Activated B cell treated with CpG ODN at 0.5 μM for 24 hours (primary cell): ENCODE measurements at regions of chr1 and their contacts with region 1.

Region 1: GRCh38 chr1:28648474-28649198 is at the start of gene RNU11:
- DNase-seq: peak; percentile 72
- ATAC-seq: peak; percentile 65
- H3K4me3 Mint-ChIP-seq: peak within 1 kb of the TSS; percentile 91
- H3K27ac Mint-ChIP-seq: peak within 1 kb of the TSS; percentile 100
- H3K4me1 Mint-ChIP-seq: peaks cover 35% of the 10 kb centered on the region
- H3K27me3 Mint-ChIP-seq: no peaks in the 10 kb centered on the region
- CTCF ChIP-seq: no peak
- total RNA-seq, gene RNU11: not detected in 2 replicates

Region 2: GRCh38 chr1:28505406-28506187 is 143.0 kb before region 1 on chr1 and contains the start of gene RCC1:
- CTCF ChIA-PET with region 1: no interaction called
- POLR2A ChIA-PET with region 1: interaction called, 59 read pairs
- intact Hi-C with region 1: loop called (anchors 1 kb)
- DNase-seq: peak; percentile 82
- ATAC-seq: peak; percentile 87
- H3K4me3 Mint-ChIP-seq: peak within 1 kb of the TSS; percentile 98
- H3K27ac Mint-ChIP-seq: peak within 1 kb of the TSS; percentile 98
- H3K4me1 Mint-ChIP-seq: peaks cover 38% of the 10 kb centered on the region
- H3K27me3 Mint-ChIP-seq: no peaks in the 10 kb centered on the region
- CTCF ChIP-seq: no peak
- total RNA-seq, gene RCC1: 45.2 and 47.5 TPM in 2 replicates

Region 3: GRCh38 chr1:28552758-28553663 is 95.6 kb before region 1 on chr1 and contains the start of gene TRNAU1AP:
- CTCF ChIA-PET with region 1: no interaction called
- POLR2A ChIA-PET with region 1: interaction called, 21 read pairs
- intact Hi-C with region 1: loop called (anchors 1 kb)
- DNase-seq: peak; percentile 94
- ATAC-seq: peak; percentile 93
- H3K4me3 Mint-ChIP-seq: peak within 1 kb of the TSS; percentile 99
- H3K27ac Mint-ChIP-seq: peak within 1 kb of the TSS; percentile 98
- H3K4me1 Mint-ChIP-seq: peaks cover 26% of the 10 kb centered on the region
- H3K27me3 Mint-ChIP-seq: no peaks in the 10 kb centered on the region
- CTCF ChIP-seq: no peak
- total RNA-seq, gene TRNAU1AP: 36.9 and 42.0 TPM in 2 replicates

Region 4: GRCh38 chr1:28602536-28603439 is 45.8 kb before region 1 on chr1:
- CTCF ChIA-PET with region 1: no interaction called
- POLR2A ChIA-PET with region 1: no interaction called
- intact Hi-C with region 1: no loop called
- DNase-seq: no peak
- ATAC-seq: peak; percentile 42
- H3K4me3 Mint-ChIP-seq: no peak overlapping the region
- H3K27ac Mint-ChIP-seq: no peak overlapping the region
- H3K4me1 Mint-ChIP-seq: no peaks in the 10 kb centered on the region
- H3K27me3 Mint-ChIP-seq: no peaks in the 10 kb centered on the region
- CTCF ChIP-seq: peak; percentile 53

Region 5: DNA sequence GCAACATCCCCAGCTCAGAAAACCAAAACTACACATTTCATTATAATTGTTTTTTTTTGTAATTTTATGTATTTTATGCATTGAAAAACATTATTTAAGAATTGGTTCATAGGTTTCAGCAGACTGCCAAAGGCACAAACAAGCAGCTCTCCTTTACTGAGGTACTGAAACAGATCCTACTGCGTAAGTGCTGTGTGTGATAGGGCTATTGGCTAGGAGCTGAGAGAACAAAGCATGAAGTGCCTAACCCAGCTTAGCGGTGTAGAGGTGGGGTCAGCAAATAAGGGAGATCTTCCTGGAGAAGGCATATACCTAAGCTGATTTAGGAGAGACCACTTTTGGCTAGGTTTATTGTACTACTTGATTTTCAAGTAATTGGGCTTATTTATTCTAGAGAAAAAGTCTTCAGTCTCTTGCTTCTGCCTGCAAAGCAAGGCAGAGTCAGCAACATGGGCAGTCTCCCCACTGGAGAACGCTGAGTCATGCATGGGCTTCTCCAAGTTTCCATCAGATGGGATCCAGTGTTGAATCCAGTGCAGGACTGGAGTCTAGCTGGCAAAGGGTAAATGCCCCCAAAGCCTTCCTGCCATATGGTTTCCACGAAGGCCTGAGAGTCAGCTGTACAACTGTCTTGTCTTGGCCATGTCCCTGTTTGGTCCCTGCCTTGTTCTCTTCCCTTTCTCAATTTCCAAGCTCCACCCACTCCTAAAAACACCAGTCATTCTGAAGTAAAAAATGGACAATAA is 70.1 kb after region 1 on chr1:
- CTCF ChIA-PET with region 1: no interaction called
- POLR2A ChIA-PET with region 1: interaction called, 10 read pairs
- intact Hi-C with region 1: no loop called
- DNase-seq: no peak
- ATAC-seq: no peak
- H3K4me3 Mint-ChIP-seq: no peak overlapping the region
- H3K27ac Mint-ChIP-seq: no peak overlapping the region
- H3K4me1 Mint-ChIP-seq: no peaks in the 10 kb centered on the region
- H3K27me3 Mint-ChIP-seq: no peaks in the 10 kb centered on the region
- CTCF ChIP-seq: no peak

Region 6: DNA sequence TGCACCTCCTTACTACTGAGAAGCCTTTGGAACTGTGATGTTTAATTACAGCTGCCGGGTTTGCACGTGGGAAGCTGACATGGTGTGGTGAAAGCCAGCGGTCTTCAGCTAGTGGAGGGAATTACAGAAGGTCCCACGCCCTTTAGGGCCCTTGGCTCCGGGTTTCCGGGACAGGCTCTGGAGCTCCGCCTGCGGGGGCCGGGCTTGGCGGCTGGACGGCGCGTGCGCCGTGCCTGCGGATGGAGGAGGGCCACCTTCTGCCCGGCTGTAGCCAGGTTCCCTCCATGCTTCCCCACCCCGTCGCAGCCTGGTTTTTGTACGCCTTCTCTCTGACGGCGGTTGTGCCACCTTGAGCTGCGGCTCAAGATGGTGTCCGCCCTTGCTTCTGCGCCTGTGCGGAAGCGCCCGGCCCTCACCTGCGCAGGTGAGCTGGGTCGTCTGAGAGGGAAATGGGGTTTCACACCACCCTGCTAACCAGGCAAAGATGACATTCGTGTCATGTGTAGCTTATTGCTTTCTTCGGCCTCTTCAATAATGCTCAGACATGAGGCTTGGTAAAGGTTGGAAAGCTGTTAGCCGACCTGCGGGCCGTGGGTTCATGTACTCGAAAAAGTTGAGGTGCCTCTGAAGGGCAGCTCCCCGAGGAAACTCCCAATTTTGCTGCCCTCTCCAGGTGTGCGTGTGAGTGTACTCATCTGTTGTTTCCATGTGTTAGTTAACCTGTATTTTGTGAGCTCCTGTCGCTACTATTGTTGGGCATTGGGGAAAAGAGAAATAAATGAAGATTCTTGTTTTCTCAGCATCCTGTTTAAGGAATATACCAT is 126.7 kb after region 1 on chr1:
- CTCF ChIA-PET with region 1: interaction called, 7 read pairs
- POLR2A ChIA-PET with region 1: interaction called, 20 read pairs
- intact Hi-C with region 1: no loop called
- DNase-seq: peak; percentile 62
- ATAC-seq: peak; percentile 95
- H3K4me3 Mint-ChIP-seq: peak overlapping the region; percentile 87
- H3K27ac Mint-ChIP-seq: peak overlapping the region; percentile 61
- H3K4me1 Mint-ChIP-seq: peaks cover 10% of the 10 kb centered on the region
- H3K27me3 Mint-ChIP-seq: no peaks in the 10 kb centered on the region
- CTCF ChIP-seq: no peak

Region 7: DNA sequence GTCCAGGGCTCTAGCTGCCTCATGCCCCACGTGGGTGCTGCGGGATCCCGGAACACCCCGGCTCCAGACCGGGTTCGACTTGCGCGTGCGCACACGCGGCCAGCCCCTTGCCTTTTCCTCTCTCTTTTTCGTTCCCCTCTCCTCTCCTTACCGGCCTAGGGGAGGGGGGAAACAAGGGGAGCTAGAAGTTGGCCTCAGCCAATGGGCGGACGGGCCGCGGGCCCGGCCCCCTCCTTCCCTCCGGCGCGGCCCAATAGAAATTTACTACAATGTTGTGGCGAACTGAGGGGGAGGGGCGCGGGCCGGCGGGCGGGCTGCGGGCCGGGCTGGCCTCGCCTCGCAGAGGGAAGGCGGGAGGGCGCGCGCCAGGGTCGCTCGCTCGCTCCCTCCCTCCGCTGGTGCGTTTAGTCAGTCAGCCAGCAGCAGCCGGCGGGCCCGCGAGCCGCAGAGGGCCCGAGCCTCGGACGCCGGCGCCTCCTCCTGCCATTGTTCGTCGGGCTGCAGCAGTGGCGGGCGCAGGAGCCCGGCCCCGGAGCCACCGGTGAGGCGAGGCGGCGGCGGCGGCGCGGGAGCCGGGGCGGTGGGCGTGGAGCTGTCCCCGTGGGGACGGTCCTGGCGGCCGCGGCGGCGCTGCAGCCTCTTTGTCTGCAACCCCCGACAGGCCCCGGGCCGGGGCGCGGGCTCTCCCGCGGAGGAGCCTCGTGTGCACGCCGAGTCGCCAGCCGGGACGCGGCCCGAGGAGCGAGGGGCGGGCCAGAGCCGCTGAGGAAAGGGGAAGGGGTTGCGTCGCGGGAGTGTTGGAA is 265.8 kb after region 1 on chr1 and contains the start of gene EPB41:
- CTCF ChIA-PET with region 1: no interaction called
- POLR2A ChIA-PET with region 1: interaction called, 14 read pairs
- intact Hi-C with region 1: no loop called
- DNase-seq: peak; percentile 86
- ATAC-seq: peak; percentile 93
- H3K4me3 Mint-ChIP-seq: peak within 1 kb of the TSS; percentile 97
- H3K27ac Mint-ChIP-seq: peak within 1 kb of the TSS; percentile 92
- H3K4me1 Mint-ChIP-seq: peaks cover 46% of the 10 kb centered on the region
- H3K27me3 Mint-ChIP-seq: no peaks in the 10 kb centered on the region
- CTCF ChIP-seq: no peak
- total RNA-seq, gene EPB41: 73.8 and 74.0 TPM in 2 replicates

Region 8: DNA sequence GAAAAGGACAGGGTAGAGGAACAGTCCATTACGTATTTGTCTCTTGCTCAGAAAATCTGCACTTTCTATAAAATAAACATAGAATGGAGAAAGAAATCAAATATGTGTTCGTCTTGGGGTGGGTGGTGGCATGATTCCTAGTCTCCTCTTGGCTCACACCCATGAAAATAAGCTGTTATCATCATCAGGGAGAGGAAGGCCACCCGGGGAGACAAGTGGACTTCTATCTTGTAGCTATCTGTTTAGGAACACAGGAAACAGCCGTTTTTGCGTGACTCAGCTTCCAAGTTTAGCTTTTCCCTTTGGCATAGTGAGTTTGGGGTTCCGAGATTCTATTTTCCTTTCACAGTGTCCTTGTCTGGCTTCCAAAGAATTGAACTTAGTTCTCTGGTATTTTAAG is 1210.0 kb after region 1 on chr1:
- CTCF ChIA-PET with region 1: no interaction called
- POLR2A ChIA-PET with region 1: no interaction called
- intact Hi-C with region 1: no loop called
- DNase-seq: no peak
- ATAC-seq: no peak
- H3K4me3 Mint-ChIP-seq: no peak overlapping the region
- H3K27ac Mint-ChIP-seq: no peak overlapping the region
- H3K4me1 Mint-ChIP-seq: no peaks in the 10 kb centered on the region
- H3K27me3 Mint-ChIP-seq: no peaks in the 10 kb centered on the region
- CTCF ChIP-seq: no peak